Activated naive CD4-positive, alpha-beta T cell treated with anti-CD3 and anti-CD28 coated beads for 36 hours (primary cell): ENCODE measurements at regions of chr3 and their contacts with region 1.

Region 1: GRCh38 chr3:106277731-106278130 is 408.9 kb upstream of the CBLB start:
- DNase-seq: no peak
- H3K4me3 Mint-ChIP-seq: no peak overlapping the region
- H3K27ac Mint-ChIP-seq: no peak overlapping the region
- H3K4me1 Mint-ChIP-seq: peaks cover 16% of the 10 kb centered on the region
- H3K27me3 Mint-ChIP-seq: no peaks in the 10 kb centered on the region

Region 2: DNA sequence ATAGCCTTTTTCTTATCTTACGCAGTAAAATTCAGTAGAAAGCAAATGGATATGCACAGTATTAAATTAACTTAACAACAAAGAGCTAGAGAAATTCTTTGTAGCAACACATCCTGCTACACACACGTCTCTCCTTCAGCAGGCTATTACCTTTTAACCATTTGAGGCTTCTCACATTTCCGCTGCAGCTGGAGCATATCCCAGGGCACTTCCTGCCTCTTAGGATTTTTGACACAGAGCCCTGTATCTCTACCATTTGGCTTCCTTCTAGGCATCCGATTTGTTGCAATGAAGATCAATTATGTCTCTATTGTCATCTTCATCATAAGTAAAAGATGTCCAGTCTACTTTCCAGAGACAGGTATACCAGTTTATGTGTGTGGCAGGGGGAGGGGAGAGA is 116.5 kb before region 1 on chr3:
- CTCF ChIA-PET with region 1: no interaction called
- intact Hi-C with region 1: no loop called
- DNase-seq: no peak
- H3K4me3 Mint-ChIP-seq: no peak overlapping the region
- H3K27ac Mint-ChIP-seq: no peak overlapping the region
- H3K4me1 Mint-ChIP-seq: no peaks in the 10 kb centered on the region
- H3K27me3 Mint-ChIP-seq: no peaks in the 10 kb centered on the region

Region 3: DNA sequence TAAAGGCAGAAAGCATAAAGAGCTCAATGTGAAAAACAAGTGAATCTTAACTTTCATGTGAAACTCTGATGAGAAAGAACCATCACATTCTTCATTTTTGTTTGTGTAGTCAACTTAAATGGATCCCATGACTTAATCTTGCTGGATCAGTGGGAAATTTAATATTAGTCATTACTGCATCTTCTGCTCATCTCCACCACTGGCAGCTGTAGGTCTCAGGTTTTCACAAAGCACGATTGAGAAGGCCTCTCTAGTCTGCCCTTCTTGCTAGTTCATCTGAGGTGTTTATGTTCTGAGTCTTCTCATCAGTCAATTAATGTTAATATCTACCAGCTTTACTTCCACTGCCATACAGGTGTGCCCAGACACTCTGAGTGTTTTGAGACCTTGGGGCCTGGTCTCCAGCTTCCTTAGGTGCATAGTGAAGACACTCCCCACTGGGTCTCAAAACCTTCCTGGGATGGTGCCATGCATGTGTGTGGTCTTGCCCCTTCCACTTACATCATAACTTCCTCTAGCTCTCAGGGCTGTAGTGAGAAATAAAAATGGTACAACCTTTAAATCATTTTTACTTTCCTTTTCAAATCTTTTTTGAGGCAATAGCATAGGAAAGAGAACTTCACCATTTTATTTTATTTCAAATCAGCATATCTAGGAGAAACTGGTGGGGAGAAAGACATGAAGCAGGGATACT is 12.7 kb after region 1 on chr3:
- CTCF ChIA-PET with region 1: no interaction called
- intact Hi-C with region 1: loop called (anchors 2 kb)
- DNase-seq: no peak
- H3K4me3 Mint-ChIP-seq: no peak overlapping the region
- H3K27ac Mint-ChIP-seq: peak overlapping the region; percentile 19
- H3K4me1 Mint-ChIP-seq: peaks cover 11% of the 10 kb centered on the region
- H3K27me3 Mint-ChIP-seq: no peaks in the 10 kb centered on the region